A673 (cell line): ENCODE measurements at regions of chr22 and their contacts with region 1.

Region 1: GRCh38 chr22:40967111-40967760 is 16.1 kb downstream of the RBX1 start:
- DNase-seq: no peak
- H3K4me3 ChIP-seq: no peak overlapping the region
- H3K27ac ChIP-seq: no peak overlapping the region
- H3K4me1 ChIP-seq: no peaks in the 10 kb centered on the region
- H3K27me3 ChIP-seq: no peaks in the 10 kb centered on the region
- CTCF ChIP-seq: no peak

Region 2: GRCh38 chr22:41062146-41062545 is 94.9 kb after region 1 on chr22:
- CTCF ChIA-PET with region 1: no interaction called
- POLR2A ChIA-PET with region 1: interaction called, 15 read pairs
- intact Hi-C with region 1: no loop called
- DNase-seq: no peak
- H3K4me3 ChIP-seq: no peak overlapping the region
- H3K27ac ChIP-seq: no peak overlapping the region
- H3K4me1 ChIP-seq: no peaks in the 10 kb centered on the region
- H3K27me3 ChIP-seq: no peaks in the 10 kb centered on the region
- CTCF ChIP-seq: no peak